Aorta (tissue), 5 donors: ENCODE measurements at regions of chr13 and their contacts with region 1.

Region 1: DNA sequence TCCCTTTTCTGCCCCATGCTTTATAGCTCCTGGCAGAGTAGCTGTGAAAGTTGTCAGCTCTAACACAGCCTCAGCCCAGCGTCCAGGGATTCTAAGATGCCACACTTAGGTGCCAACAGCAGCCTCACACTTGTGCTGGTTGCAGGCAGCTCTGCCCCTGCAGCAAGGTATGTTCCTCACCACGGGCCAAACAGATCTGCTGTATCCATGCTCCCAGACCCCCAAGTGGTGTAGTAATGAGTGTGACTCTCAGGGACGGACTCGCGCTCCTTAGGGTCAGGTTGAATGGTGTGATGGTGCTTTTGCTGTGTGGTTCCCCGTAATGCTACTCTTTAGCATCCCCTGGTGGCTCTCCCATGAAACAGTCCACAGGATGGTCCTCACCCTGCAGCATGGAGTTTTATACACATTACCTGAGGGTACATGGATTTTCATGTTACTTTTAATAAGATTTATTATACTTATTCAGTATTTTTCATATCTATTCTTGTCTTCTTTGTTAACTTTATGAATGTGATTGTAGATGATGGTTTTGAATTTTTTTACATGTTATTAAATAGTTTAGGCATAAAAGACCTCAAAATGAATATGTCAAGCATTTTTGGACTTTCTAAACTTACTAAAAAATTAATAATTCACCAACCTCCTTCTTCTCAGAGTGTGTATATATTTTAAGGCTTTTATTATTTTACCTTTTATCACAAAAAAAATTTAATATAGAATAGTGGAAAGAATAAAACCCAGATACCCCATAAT is 232.5 kb downstream of the SLC7A1 start:
- DNase-seq: peak in 1 of 2 donors; percentile 50
- ATAC-seq: peak; percentile 74
- H3K4me3 ChIP-seq: no peak overlapping the region
- H3K27ac ChIP-seq: peak overlapping the region in 1 of 2 donors; percentile 17
- H3K4me1 ChIP-seq: peaks cover 0 to 2% of the 10 kb centered on the region in 2 donors
- H3K27me3 ChIP-seq: no peaks in the 10 kb centered on the region

Region 2: DNA sequence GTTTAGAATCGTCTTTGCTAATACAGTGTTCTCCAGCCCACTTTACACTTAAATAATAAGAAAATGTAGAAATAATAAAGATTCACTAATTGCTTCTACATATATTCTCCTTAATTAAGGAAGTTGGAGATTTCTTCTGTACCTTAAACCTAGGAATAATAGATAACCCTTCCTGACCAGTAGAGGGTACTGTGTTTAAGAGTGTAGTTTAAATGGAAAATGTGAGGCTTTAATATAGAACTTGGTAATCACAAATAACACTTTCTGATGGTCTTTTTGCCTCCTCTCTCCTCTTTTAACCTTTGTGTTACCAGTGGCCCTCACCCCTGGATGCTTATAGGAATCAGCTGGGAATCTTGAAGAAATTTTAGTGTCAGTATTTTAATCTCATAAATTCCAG is 683.4 kb before region 1 on chr13:
- intact Hi-C with region 1: loop called in 1 of 2 experiments (anchors 10 kb)
- DNase-seq: no peak
- ATAC-seq: no peak
- H3K4me3 ChIP-seq: no peak overlapping the region
- H3K27ac ChIP-seq: no peak overlapping the region
- H3K4me1 ChIP-seq: no peaks in the 10 kb centered on the region
- H3K27me3 ChIP-seq: no peaks in the 10 kb centered on the region

Region 3: GRCh38 chr13:29182216-29182615 is 180.8 kb before region 1 on chr13:
- intact Hi-C with region 1: no loop called
- DNase-seq: no peak
- ATAC-seq: no peak
- H3K4me3 ChIP-seq: no peak overlapping the region
- H3K27ac ChIP-seq: no peak overlapping the region
- H3K4me1 ChIP-seq: peaks cover 0 to 2% of the 10 kb centered on the region in 2 donors
- H3K27me3 ChIP-seq: no peaks in the 10 kb centered on the region

Region 4: GRCh38 chr13:29260683-29261082 is 102.3 kb before region 1 on chr13:
- intact Hi-C with region 1: loop called in 1 of 2 experiments (anchors 10 kb)
- DNase-seq: no peak
- ATAC-seq: no peak
- H3K4me3 ChIP-seq: no peak overlapping the region
- H3K27ac ChIP-seq: no peak overlapping the region
- H3K4me1 ChIP-seq: no peaks in the 10 kb centered on the region
- H3K27me3 ChIP-seq: no peaks in the 10 kb centered on the region